GM18951 (cell line): ENCODE measurements at regions of chr14 and their contacts with region 1.

Region 1: GRCh38 chr14:92686900-92687444 is 61.5 kb downstream of the LGMN start:
- POLR2A ChIP-seq: no peak

Region 2: GRCh38 chr14:91947471-91948184 is 739.3 kb before region 1 on chr14 and contains the start of gene FBLN5:
- in situ Hi-C with region 1: no loop called
- POLR2A ChIP-seq: no peak

Region 3: GRCh38 chr14:91996948-91997371 is 690.0 kb before region 1 on chr14:
- in situ Hi-C with region 1: no loop called
- POLR2A ChIP-seq: no peak

Region 4: GRCh38 chr14:92135267-92135666 is 551.7 kb before region 1 on chr14:
- in situ Hi-C with region 1: loop called (anchors 25 kb)
- POLR2A ChIP-seq: no peak

Region 5: DNA sequence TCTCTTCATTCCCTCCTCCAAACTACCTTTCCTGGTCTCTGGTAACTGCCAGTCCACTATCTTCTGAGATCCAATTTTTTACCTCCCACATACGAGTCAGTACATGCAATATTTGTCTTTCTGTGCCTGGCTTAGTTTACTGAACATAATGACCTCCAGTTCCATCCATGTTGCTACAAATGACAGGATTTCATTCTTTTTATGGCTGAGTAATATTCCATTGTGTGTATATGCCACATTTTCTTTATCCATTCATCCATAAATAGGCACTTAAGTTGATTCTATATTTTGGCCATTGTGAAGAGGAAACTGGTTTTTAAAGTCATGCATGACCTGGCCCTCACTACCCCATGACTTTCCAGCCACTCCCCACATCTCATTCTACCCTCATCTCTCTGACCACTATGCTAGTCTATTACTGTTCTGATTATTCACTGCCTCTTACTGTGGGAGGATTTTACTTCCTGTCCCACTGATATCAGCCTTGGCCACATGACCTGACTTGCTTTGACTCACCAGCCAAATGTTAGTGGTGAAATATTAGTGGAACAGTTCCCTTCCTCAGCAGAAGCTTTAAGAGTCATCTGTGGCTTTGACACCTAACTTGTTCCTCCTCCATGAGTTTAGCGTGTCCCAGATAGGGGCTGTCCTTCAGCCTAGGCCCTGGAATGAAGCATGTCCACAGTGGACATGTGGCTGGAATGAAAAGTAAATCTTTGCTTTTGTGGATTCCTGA is 159.4 kb after region 1 on chr14:
- in situ Hi-C with region 1: no loop called
- POLR2A ChIP-seq: no peak

Region 6: GRCh38 chr14:92861856-92862745 is 175.1 kb after region 1 on chr14:
- in situ Hi-C with region 1: no loop called
- POLR2A ChIP-seq: no peak